PC-9 (cell line): ENCODE measurements at regions of chr1 and their contacts with region 1.

Region 1: DNA sequence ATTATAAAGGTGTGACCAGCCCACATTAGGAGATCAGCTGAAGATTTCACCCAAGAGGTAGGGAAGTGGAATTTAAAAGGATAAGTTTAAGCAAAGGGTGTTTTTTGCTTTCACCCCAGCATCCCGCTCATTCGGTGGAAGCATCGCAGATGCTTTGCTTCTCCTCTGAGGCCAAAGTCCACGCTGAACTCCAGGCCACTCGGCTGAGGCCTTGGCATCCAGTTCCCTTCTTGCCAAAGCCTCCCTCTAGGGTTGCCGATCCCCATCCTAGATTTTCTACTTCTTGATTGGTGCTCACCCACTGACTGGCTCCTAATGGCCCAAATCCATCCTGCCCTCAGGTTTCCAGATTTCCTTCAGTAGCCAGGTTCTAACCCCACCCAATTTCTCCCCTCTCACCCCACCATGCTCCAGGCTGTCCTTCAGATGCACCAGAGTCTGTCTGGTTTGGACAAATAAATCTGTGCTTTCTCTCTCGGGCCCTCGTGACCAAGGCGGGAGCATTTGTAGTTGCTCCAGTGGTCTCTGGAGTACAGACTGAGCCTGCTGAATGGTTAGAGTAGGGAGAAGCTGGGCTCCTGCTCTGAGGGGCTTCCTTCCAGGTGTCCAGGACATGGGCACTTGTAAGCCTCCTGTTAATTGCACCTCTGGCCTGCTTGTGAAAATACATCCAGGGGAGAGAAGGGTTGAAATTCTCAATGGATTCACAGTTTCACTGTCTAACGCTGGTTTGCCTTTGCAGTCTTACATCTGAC is 193.2 kb downstream of the C1orf94 start:
- DNase-seq: no peak
- H3K4me3 ChIP-seq: no peak overlapping the region
- H3K27ac ChIP-seq: no peak overlapping the region
- H3K4me1 ChIP-seq: no peaks in the 10 kb centered on the region
- H3K27me3 ChIP-seq: 0 out of 2 replicates have a peak, but pooled peaks cover 3% of the 10 kb centered on the region
- CTCF ChIP-seq: no peak

Region 2: DNA sequence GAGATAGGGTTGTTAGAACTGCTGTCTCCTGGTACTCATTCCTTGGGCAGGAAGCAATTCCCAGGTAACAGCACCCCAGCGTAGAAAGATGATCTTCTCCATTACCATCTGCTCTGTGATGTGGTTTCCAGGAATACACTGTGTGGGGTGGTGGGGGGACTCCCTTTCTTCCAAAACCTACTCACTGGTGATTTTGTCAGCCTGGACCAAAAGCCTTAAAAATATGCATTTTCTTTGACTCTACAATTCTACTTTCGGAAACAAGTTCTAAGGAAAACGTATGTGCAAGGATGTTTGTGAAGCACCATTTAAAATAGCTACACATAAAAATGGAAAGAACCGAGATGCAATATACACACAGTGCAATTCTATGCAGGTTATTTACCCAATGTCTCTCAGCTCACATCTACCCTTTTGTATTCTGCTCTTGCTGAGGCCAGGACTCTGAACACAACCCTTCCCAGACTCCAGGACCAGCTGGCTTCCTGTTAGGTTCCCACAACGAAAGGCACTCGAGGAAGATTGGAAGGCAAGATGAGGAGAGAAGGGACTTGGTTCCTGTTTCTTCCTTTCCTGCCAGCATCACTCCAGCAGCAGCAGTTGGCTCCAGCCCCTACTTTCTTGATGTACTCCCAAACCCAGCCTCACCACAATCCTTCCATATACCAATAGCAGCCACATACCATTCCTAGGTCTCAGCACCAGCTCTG is 351.9 kb after region 1 on chr1:
- CTCF ChIA-PET with region 1: no interaction called
- POLR2A ChIA-PET with region 1: interaction called, 13 read pairs
- intact Hi-C with region 1: no loop called
- DNase-seq: no peak
- H3K4me3 ChIP-seq: no peak overlapping the region
- H3K27ac ChIP-seq: no peak overlapping the region
- H3K4me1 ChIP-seq: no peaks in the 10 kb centered on the region
- H3K27me3 ChIP-seq: peaks cover 74% of the 10 kb centered on the region
- CTCF ChIP-seq: no peak